ENCODE measurements at regions of chr3 and their contacts with region 1.

Region 1: GRCh38 chr3:112111785-112112402 is 21.2 kb downstream of the GCSAM start:
- DNase-seq: peak; percentile 46
- ATAC-seq: peak; percentile 98
- H3K4me3 ChIP-seq: no peak overlapping the region
- H3K27ac ChIP-seq: no peak overlapping the region
- H3K4me1 ChIP-seq: peaks cover 0 to 6% of the 10 kb centered on the region in 2 experiments; a peak in 1 of 4 replicates
- H3K27me3 ChIP-seq: no peaks in the 10 kb centered on the region
- CTCF ChIP-seq: peak; percentile 54 to 90 (median 77); a peak in 5 of 6 replicates
- POLR2A ChIP-seq: no peak
- RAD21 ChIP-seq: peak; percentile 80

Region 2: GRCh38 chr3:112097378-112097777 is 14.5 kb before region 1 on chr3:
- CTCF ChIA-PET with region 1: interaction called, 15 read pairs
- POLR2A ChIA-PET with region 1: no interaction called
- RAD21 ChIA-PET with region 1: no interaction called
- intact Hi-C with region 1: no loop called
- DNase-seq: peak; percentile 91
- ATAC-seq: peak; percentile 96
- H3K4me3 ChIP-seq: no peak overlapping the region
- H3K27ac ChIP-seq: no peak overlapping the region
- H3K4me1 ChIP-seq: peaks cover 4 to 31% of the 10 kb centered on the region in 2 experiments
- H3K27me3 ChIP-seq: no peaks in the 10 kb centered on the region
- CTCF ChIP-seq: no peak
- POLR2A ChIP-seq: no peak
- RAD21 ChIP-seq: 0 out of 2 replicates have a peak, but pooled peaks have one; percentile 10

Region 3: GRCh38 chr3:112136959-112137693 is 25.2 kb after region 1 on chr3:
- CTCF ChIA-PET with region 1: interaction called, 10 read pairs
- POLR2A ChIA-PET with region 1: no interaction called
- RAD21 ChIA-PET with region 1: no interaction called
- intact Hi-C with region 1: no loop called
- DNase-seq: peak; percentile 49
- ATAC-seq: peak; percentile 88
- H3K4me3 ChIP-seq: no peak overlapping the region
- H3K27ac ChIP-seq: no peak overlapping the region
- H3K4me1 ChIP-seq: no peaks in the 10 kb centered on the region; a peak in 1 of 4 replicates
- H3K27me3 ChIP-seq: no peaks in the 10 kb centered on the region
- CTCF ChIP-seq: peak; percentile 66 to 81 (median 78); a peak in 5 of 6 replicates
- POLR2A ChIP-seq: no peak
- RAD21 ChIP-seq: peak; percentile 83

Region 4: DNA sequence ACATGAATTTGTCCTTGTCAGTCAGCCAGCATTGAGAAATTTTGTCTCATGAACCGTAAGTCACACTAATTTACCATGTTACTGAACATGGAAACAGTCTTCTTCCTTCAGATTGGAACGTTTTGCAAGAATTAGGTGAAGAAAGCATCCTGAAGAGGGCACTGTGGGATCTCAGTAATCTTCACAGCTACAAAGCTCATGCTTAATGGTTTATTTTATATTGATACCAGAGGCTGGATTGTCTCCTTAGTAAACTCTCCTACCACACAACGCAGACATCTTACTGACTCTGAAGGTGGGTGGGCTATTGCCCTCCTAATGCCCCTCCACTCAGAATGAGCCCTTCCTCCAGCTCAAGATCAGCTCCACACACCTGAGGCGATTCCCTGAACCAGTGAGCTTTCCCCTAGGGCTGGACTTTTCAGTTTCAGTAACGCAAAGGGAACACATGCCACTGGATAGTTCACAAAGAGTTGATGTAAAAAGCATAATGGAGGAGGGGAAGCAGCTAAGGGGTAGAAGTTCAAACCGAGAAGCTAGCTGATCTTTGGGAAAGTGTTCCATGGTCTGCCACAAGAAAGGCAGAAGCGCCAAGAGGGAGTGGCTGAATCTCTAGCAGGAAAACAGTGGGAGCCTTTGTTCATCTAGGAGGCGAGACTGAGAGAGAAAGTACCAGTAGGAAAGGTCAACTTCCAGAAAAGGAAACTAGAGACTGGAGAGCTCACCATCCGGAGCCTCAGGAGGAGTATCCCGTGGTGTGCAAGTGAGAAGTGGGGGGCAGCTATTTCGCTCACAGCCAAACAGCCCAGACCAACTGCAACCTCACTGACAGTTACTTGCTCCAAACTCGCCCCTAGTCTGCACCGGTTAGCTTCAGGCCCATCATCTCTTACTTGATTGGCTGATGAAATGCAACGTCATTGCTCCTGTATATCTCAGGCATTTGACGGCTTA is 181.8 kb after region 1 on chr3 and contains the start of gene SLC9C1:
- CTCF ChIA-PET with region 1: interaction called, 13 read pairs
- POLR2A ChIA-PET with region 1: no interaction called
- RAD21 ChIA-PET with region 1: no interaction called
- intact Hi-C with region 1: no loop called
- DNase-seq: peak; percentile 69
- ATAC-seq: peak; percentile 89
- H3K4me3 ChIP-seq: peak within 1 kb of the TSS; percentile 30 to 54
- H3K27ac ChIP-seq: peak within 1 kb of the TSS; percentile 50
- H3K4me1 ChIP-seq: peaks cover 7 to 21% of the 10 kb centered on the region in 2 experiments
- H3K27me3 ChIP-seq: no peaks in the 10 kb centered on the region
- CTCF ChIP-seq: peak; percentile 52 to 67 (median 57); a peak in 5 of 6 replicates
- POLR2A ChIP-seq: peak; percentile 54
- RAD21 ChIP-seq: peak; percentile 80
- total RNA-seq, gene SLC9C1: 0.79 TPM

Region 5: DNA sequence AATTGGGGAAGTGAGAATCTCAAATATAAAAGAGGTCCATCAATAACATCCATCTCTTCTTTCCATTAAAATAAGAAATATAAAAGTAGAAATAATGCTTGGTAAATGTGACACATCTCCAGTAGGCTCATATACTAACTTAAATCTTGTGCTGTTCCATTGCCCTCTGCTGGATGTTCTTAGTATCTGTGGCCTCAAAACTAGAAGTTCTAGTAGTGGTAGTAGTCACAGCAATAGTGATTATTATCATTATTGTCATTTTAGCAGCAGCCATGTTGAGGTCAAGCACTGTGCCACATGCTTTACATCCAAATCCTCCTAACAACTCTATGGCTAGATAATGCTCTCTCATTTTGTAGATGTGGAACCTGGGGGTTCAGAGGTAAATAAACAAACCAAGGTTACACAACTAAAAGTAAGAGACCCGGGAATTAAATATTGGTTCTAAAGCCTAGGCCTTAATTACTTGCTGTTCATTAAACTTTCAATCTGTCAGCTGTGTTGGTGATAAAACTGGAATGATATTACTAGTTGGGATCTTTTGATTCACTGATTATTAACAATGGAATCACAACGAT is 407.6 kb after region 1 on chr3:
- CTCF ChIA-PET with region 1: interaction called, 12 read pairs
- POLR2A ChIA-PET with region 1: no interaction called
- RAD21 ChIA-PET with region 1: no interaction called
- intact Hi-C with region 1: loop called (anchors 1 kb)
- DNase-seq: peak; percentile 51
- ATAC-seq: peak; percentile 90
- H3K4me3 ChIP-seq: no peak overlapping the region
- H3K27ac ChIP-seq: no peak overlapping the region
- H3K4me1 ChIP-seq: no peaks in the 10 kb centered on the region
- H3K27me3 ChIP-seq: no peaks in the 10 kb centered on the region
- CTCF ChIP-seq: peak; percentile 68 to 76 (median 69)
- POLR2A ChIP-seq: no peak
- RAD21 ChIP-seq: peak; percentile 83

Region 6: GRCh38 chr3:112531358-112531781 is 419.5 kb after region 1 on chr3:
- CTCF ChIA-PET with region 1: interaction called, 6 read pairs
- POLR2A ChIA-PET with region 1: no interaction called
- RAD21 ChIA-PET with region 1: no interaction called
- intact Hi-C with region 1: loop called (anchors 5 kb)
- DNase-seq: peak; percentile 6
- ATAC-seq: no peak
- H3K4me3 ChIP-seq: no peak overlapping the region
- H3K27ac ChIP-seq: no peak overlapping the region
- H3K4me1 ChIP-seq: no peaks in the 10 kb centered on the region
- H3K27me3 ChIP-seq: no peaks in the 10 kb centered on the region
- CTCF ChIP-seq: peak in 2 of 3 experiments; percentile 31 to 73; a peak in 3 of 6 replicates
- POLR2A ChIP-seq: no peak
- RAD21 ChIP-seq: peak; percentile 35; the same call in 1 of the 2 replicates

Region 7: GRCh38 chr3:112979240-112979832 is 867.4 kb after region 1 on chr3:
- CTCF ChIA-PET with region 1: no interaction called
- POLR2A ChIA-PET with region 1: no interaction called
- RAD21 ChIA-PET with region 1: no interaction called
- intact Hi-C with region 1: loop called (anchors 10 kb)
- DNase-seq: peak; percentile 13
- ATAC-seq: peak; percentile 34; the same call in 1 of the 2 replicates
- H3K4me3 ChIP-seq: no peak overlapping the region
- H3K27ac ChIP-seq: no peak overlapping the region
- H3K4me1 ChIP-seq: no peaks in the 10 kb centered on the region
- H3K27me3 ChIP-seq: no peaks in the 10 kb centered on the region
- CTCF ChIP-seq: peak; percentile 42 to 77 (median 66); a peak in 5 of 6 replicates
- POLR2A ChIP-seq: no peak
- RAD21 ChIP-seq: peak; percentile 69